Activated CD4-positive, alpha-beta T cell treated with anti-CD3 and anti-CD28 coated beads, Interleukin-2, amount 10 ng/mL, durations not matched to agents 24 days and 14 days (primary cell): ENCODE measurements at regions of chr4 and their contacts with region 1.

Region 1: DNA sequence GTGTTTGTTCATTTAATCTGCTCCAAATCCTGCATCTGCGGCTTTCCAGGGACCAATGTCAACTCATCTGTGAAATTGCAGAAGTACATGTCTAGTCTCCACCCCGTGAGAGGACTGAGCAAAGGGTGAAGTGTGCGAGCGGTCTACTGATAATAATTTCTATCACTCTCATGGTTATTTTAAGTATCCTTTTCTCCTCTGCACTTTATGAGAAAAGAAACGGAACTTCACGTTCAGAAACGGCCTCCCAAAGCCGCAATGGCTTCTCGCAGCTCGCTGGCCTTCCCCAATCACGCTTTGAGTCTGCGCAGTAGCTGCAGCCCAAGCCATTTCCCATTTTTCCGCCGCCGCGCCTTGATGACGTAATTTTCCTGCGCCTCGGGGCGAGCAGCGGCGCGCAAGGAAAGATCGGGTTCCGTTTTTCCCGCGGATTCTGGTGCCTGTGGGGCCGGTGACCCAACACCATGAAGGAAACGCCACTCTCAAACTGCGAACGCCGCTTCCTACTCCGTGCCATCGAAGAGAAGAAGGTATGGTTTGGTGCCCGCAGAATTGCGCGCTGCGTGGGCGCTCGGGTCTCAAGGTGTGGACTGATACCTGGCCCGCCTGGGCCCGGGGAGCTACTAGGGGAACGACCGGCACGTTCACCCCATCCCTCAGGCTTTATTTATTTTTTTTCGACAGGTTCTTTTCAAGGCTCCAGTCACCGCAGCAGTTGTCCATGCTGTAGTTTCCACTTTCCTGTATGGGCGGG is at the start of gene EXOSC9:
- DNase-seq: peak; percentile 99
- H3K4me3 Mint-ChIP-seq: peak within 1 kb of the TSS; percentile 83
- H3K27ac Mint-ChIP-seq: peak within 1 kb of the TSS; percentile 96
- H3K4me1 Mint-ChIP-seq: peaks cover 47% of the 10 kb centered on the region
- H3K27me3 Mint-ChIP-seq: peaks cover 3% of the 10 kb centered on the region
- total RNA-seq, gene EXOSC9: 76.9 and 78.8 TPM in 2 replicates

Region 2: DNA sequence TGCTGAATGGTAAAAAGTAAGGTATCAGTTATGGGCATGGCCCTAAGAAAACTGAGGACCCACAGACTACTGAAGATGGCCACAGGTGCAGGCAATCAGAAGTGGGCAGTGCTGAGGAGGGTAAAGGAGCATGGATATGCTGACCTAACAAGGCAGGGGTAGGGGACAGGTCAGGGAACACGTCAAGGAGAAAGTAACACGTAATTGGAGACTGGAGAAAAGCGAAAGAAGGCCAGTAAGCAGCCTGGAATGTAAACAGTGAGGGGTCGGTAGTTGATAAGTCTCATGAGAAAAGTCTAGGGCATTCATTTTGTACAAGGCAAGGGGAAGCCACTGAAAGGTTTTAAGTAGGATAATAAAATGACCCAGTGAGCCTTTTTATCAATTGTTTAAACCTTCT is 1031.9 kb before region 1 on chr4:
- intact Hi-C with region 1: no loop called
- DNase-seq: no peak
- H3K4me3 Mint-ChIP-seq: no peak overlapping the region
- H3K27ac Mint-ChIP-seq: no peak overlapping the region
- H3K4me1 Mint-ChIP-seq: no peaks in the 10 kb centered on the region
- H3K27me3 Mint-ChIP-seq: no peaks in the 10 kb centered on the region

Region 3: GRCh38 chr4:121696581-121697461 is 104.3 kb before region 1 on chr4 and contains the start of gene ANXA5:
- intact Hi-C with region 1: loop called (anchors 2 kb)
- DNase-seq: peak; percentile 94
- H3K4me3 Mint-ChIP-seq: peak within 1 kb of the TSS; percentile 98
- H3K27ac Mint-ChIP-seq: peak within 1 kb of the TSS; percentile 100
- H3K4me1 Mint-ChIP-seq: peaks cover 39% of the 10 kb centered on the region
- H3K27me3 Mint-ChIP-seq: peaks cover 33% of the 10 kb centered on the region
- total RNA-seq, gene ANXA5: 107 TPM in 2 replicates

Region 4: GRCh38 chr4:121817701-121818100 is 16.6 kb after region 1 on chr4:
- intact Hi-C with region 1: loop called (anchors 1 kb)
- DNase-seq: no peak
- H3K4me3 Mint-ChIP-seq: no peak overlapping the region
- H3K27ac Mint-ChIP-seq: peak overlapping the region; percentile 0
- H3K4me1 Mint-ChIP-seq: peaks cover 45% of the 10 kb centered on the region
- H3K27me3 Mint-ChIP-seq: no peaks in the 10 kb centered on the region